Dorsolateral prefrontal cortex (tissue), 120 donors: ENCODE measurements at regions of chr20 and their contacts with region 1.

Region 1: DNA sequence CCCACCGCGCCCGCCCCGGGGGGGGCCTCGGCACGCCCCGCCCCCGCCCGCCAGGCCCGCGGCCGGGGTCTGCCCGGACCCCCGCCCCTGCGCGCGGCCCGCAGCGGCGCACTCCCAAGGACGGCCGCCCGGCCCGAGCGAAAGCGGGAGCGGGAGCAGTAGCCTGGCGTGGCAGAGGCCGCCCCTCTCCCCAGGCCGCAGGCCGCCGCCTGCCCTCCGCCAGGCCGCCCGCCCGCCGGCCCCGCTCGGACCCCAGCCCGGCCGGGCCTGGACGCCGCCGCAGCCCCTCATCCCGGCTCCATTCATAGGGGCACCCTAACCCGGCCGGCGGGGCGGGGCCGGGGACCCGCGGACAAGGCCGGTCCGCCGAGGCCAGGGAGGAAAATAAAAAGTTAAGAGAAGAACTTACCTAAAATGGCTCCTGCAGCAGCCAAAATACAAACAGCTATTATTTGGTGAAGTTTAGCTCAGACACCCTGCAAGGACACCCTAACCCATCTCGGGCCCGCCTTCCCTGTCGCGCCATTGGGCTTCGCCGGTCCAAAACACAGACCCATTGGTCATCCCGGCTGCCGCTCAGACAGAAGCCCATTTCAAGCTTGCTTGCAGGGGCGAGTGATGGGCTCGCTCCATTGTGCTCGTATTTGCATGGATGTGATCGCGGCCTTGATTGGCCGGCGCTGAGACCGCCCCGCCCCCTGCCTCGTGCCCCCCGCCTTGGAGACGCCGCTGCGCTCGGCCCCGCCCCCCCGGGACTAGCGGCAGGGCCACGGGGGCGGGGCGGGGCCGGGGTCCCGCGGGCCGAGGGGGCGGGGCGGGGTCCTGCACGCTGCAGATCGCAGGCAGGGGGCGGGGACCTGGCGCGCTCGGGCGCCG is at the start of gene CHD6:
- DNase-seq: peak; percentile 98 to 100 (median 100)
- H3K4me3 ChIP-seq: peak within 1 kb of the TSS; percentile 58 to 94 (median 80)
- H3K27ac ChIP-seq: peak within 1 kb of the TSS; percentile 0 to 95 (median 85)
- H3K27me3 ChIP-seq: no peaks in the 10 kb centered on the region
- CTCF ChIP-seq: peak in 6 of 56 donors; percentile 4 to 32 (median 14)
- total RNA-seq, gene CHD6: 89.1 to 162 (median 116) TPM

Region 2: DNA sequence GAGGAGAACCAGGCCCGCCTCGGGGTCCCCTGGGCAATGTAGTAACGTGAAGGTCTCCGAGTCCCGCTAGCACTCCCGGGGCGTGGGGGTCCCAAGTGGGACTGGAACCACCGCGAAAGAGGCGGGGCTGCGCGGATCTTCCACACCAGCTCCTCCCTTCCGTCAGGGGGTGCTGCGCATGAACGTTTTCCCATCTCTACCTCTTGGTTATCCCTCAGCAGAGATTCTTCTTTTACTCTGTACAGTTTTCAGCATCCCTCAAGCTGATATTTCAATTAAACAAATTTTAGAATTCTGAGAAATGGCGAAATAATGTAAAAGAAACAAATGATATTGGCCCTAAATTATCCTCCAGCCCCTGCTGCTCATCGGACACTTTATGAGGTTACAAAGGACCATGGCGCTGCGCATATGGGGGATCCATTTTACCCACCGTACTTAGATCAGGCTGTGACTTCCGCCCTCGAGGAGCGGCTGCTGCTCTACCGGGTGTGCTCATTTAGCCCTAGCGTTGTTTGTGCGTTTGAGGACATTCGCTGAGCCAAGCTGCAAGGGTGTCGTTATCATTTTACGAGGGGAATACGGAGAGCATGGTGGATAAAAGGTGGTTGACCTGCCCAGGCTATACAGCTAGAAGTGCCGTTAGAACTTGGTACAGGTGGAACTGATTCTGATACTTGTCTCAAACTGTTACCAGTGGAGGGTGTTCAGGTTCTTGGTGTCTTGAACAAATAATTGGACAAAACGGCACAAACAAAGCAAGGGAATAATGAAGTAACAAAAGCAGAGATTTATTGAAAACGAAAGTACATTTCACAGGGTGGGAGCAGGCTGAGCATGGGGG is 75.2 kb after region 1 on chr20:
- intact Hi-C with region 1: loop called (anchors 1 kb)
- DNase-seq: peak; percentile 56 to 88 (median 82)
- H3K4me3 ChIP-seq: peak overlapping the region; percentile 60 to 97 (median 84)
- H3K27ac ChIP-seq: peak overlapping the region; percentile 76 to 99 (median 94)
- H3K27me3 ChIP-seq: no peaks in the 10 kb centered on the region
- CTCF ChIP-seq: peak; percentile 34 to 72 (median 58)